K562 (cell line): ENCODE measurements at regions of chr14 and their contacts with region 1.

Region 1: GRCh38 chr14:99628832-99629618 is 15.9 kb upstream of the HHIPL1 start:
- DNase-seq: peak; percentile 75 to 81 (median 79)
- ATAC-seq: peak; percentile 98
- H3K4me3 ChIP-seq: no peak overlapping the region
- H3K27ac ChIP-seq: no peak overlapping the region
- H3K4me1 ChIP-seq: peaks cover 0 to 12% of the 10 kb centered on the region in 2 experiments; a peak in 2 of 5 replicates
- H3K27me3 ChIP-seq: peaks cover 0 to 23% of the 10 kb centered on the region in 2 experiments; a peak in 2 of 5 replicates
- CTCF ChIP-seq: peak; percentile 93 to 97 (median 94)
- EP300 ChIP-seq: no peak
- POLR2A ChIP-seq: no peak
- RAD21 ChIP-seq: peak; percentile 87 to 94

Region 2: DNA sequence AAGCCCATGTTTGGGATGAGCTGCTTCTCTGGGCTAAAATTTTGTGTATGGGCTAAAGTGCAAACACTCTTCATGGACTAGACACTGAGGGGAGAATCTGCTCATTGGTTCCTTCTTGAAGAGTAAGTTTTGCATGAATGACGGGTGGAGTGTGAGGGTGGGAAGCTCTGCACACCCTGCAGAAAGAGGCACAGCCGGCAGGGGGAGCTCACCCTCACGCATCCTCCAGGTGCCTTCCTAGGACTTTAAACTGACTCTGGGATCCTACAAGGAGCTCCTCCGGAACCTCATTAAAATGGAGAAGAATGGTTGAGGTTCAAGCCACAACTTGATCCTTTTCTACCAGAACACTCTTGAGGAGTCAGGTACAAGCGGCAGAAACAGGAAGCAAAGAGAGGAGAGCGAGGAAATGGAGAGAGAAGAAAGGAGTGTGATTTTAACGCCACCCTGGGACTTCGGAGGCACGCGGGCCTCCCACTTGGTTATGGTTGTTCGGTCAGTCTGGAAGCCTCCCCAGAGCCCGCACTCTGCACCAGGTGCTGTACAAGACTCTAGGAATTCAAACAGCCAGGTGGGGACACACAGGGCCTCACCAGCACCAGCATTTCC is 235.9 kb before region 1 on chr14:
- CTCF ChIA-PET with region 1: no interaction called
- POLR2A ChIA-PET with region 1: no interaction called
- in situ Hi-C with region 1: no loop called
- intact Hi-C with region 1: loop called (anchors 10 kb)
- DNase-seq: peak; percentile 55 to 68 (median 61)
- ATAC-seq: peak; percentile 91
- H3K4me3 ChIP-seq: no peak overlapping the region
- H3K27ac ChIP-seq: no peak overlapping the region
- H3K4me1 ChIP-seq: peaks cover 0 to 6% of the 10 kb centered on the region in 2 experiments; a peak in 1 of 5 replicates
- H3K27me3 ChIP-seq: peaks cover 0 to 8% of the 10 kb centered on the region in 2 experiments; a peak in 2 of 5 replicates
- CTCF ChIP-seq: peak; percentile 64 to 83 (median 67)
- EP300 ChIP-seq: no peak
- POLR2A ChIP-seq: no peak
- RAD21 ChIP-seq: peak in 1 of 2 experiments; percentile 33; a peak in 2 of 4 replicates

Region 3: GRCh38 chr14:99518441-99519346 is 110.3 kb before region 1 on chr14:
- CTCF ChIA-PET with region 1: interaction called, 22 read pairs
- POLR2A ChIA-PET with region 1: interaction called, 3 read pairs
- in situ Hi-C with region 1: no loop called
- intact Hi-C with region 1: loop called (anchors 1 kb)
- DNase-seq: peak; percentile 69 to 76 (median 74)
- ATAC-seq: peak; percentile 90
- H3K4me3 ChIP-seq: no peak overlapping the region
- H3K27ac ChIP-seq: no peak overlapping the region
- H3K4me1 ChIP-seq: peaks cover 11 to 41% of the 10 kb centered on the region in 2 experiments
- H3K27me3 ChIP-seq: no peaks in the 10 kb centered on the region
- CTCF ChIP-seq: peak; percentile 79 to 84 (median 82)
- EP300 ChIP-seq: no peak
- POLR2A ChIP-seq: no peak
- RAD21 ChIP-seq: peak; percentile 80 to 88

Region 4: DNA sequence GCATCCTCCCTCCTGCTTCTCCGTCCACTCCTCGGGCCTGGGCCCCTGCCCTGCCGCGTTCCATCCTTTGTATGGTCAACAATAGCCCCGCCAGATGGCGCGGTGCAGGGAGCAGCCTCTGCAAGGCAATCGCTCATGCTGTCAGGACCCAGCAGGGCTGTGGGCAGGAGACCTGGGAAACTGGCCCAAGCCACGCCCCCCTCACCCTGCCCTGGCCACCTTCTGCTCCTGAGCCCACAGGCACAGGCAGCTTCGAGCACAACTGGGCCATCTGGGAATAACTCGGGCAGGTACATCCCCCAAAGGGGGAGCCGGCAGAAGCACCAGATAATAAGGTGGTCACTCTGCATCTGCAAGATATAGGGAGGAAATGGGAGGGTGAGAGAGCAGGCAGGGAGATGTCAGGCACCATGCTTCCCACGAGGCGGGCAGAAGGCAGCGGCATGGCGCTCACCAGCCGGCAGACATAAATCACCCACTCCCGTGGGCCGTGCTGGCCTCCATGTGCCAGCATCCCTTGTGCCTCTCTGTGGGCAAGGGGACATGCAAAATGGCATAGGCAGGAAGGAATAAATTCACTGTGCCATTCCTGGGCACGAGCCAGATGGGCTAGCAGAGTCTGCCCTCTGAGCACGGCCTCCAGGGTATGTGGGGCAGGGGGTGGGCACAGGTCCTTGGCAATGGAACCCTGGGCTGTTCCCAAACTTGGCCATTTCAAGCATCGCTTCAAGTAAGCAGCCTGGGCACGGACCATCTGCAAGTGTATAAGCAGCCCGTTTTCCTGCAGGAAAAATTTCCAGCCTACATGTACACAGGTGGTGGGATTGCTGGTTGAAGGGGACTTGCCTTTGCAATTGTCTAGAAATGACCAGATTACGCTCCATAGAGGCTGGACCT is 65.5 kb before region 1 on chr14:
- CTCF ChIA-PET with region 1: interaction called, 3 read pairs
- POLR2A ChIA-PET with region 1: no interaction called
- in situ Hi-C with region 1: no loop called
- intact Hi-C with region 1: loop called (anchors 1 kb)
- DNase-seq: peak; percentile 43 to 66 (median 59)
- ATAC-seq: peak; percentile 98
- H3K4me3 ChIP-seq: no peak overlapping the region
- H3K27ac ChIP-seq: no peak overlapping the region
- H3K4me1 ChIP-seq: peaks cover 5 to 49% of the 10 kb centered on the region in 2 experiments; a peak in 4 of 5 replicates
- H3K27me3 ChIP-seq: no peaks in the 10 kb centered on the region
- CTCF ChIP-seq: peak; percentile 38 to 55 (median 54); a peak in 4 of 6 replicates
- EP300 ChIP-seq: no peak
- POLR2A ChIP-seq: no peak
- RAD21 ChIP-seq: peak; percentile 40 to 67; a peak in 3 of 4 replicates

Region 5: GRCh38 chr14:99575043-99576023 is 53.7 kb before region 1 on chr14:
- CTCF ChIA-PET with region 1: no interaction called
- POLR2A ChIA-PET with region 1: no interaction called
- in situ Hi-C with region 1: no loop called
- intact Hi-C with region 1: no loop called
- DNase-seq: peak; percentile 17 to 37 (median 28)
- ATAC-seq: peak; percentile 28
- H3K4me3 ChIP-seq: no peak overlapping the region
- H3K27ac ChIP-seq: no peak overlapping the region
- H3K4me1 ChIP-seq: peaks cover 15 to 72% of the 10 kb centered on the region in 2 experiments
- H3K27me3 ChIP-seq: no peaks in the 10 kb centered on the region
- CTCF ChIP-seq: peak in 2 of 3 experiments; percentile 26 to 36; a peak in 3 of 6 replicates
- EP300 ChIP-seq: no peak
- POLR2A ChIP-seq: no peak
- RAD21 ChIP-seq: no peak

Region 6: DNA sequence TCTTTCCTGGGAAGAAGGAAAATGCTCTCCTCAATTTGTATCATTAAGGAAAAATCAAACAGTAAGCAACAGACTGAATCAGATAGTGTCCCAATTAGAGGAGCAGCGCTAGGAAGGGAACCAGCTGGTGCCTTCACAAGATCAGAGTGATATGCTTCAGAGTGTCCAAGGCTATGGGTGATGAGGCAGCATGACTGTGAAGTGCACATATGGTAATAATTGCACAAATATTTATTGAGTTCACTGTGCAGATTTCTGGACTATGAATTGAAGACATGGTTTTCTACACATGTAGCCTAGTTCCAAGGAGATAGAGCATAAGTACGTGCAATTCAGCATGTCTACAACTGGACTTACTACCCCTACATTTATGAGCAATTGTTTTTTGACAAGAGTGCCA is 357.4 kb after region 1 on chr14:
- CTCF ChIA-PET with region 1: no interaction called
- POLR2A ChIA-PET with region 1: no interaction called
- in situ Hi-C with region 1: no loop called
- intact Hi-C with region 1: no loop called
- DNase-seq: no peak
- ATAC-seq: no peak
- H3K4me3 ChIP-seq: no peak overlapping the region
- H3K27ac ChIP-seq: no peak overlapping the region
- H3K4me1 ChIP-seq: peaks cover 0 to 2% of the 10 kb centered on the region in 2 experiments; a peak in 3 of 5 replicates
- H3K27me3 ChIP-seq: no peaks in the 10 kb centered on the region
- CTCF ChIP-seq: no peak
- EP300 ChIP-seq: no peak
- POLR2A ChIP-seq: no peak
- RAD21 ChIP-seq: no peak

Region 7: GRCh38 chr14:100362311-100362927 is 733.4 kb after region 1 on chr14:
- CTCF ChIA-PET with region 1: no interaction called
- POLR2A ChIA-PET with region 1: no interaction called
- in situ Hi-C with region 1: no loop called
- intact Hi-C with region 1: no loop called
- DNase-seq: no peak
- ATAC-seq: no peak
- H3K4me3 ChIP-seq: no peak overlapping the region
- H3K27ac ChIP-seq: no peak overlapping the region
- H3K4me1 ChIP-seq: no peaks in the 10 kb centered on the region
- H3K27me3 ChIP-seq: no peaks in the 10 kb centered on the region
- CTCF ChIP-seq: no peak
- EP300 ChIP-seq: no peak
- POLR2A ChIP-seq: no peak
- RAD21 ChIP-seq: no peak